Stomach (tissue), 19 donors: ENCODE measurements at regions of chr6 and their contacts with region 1.

Region 1: DNA sequence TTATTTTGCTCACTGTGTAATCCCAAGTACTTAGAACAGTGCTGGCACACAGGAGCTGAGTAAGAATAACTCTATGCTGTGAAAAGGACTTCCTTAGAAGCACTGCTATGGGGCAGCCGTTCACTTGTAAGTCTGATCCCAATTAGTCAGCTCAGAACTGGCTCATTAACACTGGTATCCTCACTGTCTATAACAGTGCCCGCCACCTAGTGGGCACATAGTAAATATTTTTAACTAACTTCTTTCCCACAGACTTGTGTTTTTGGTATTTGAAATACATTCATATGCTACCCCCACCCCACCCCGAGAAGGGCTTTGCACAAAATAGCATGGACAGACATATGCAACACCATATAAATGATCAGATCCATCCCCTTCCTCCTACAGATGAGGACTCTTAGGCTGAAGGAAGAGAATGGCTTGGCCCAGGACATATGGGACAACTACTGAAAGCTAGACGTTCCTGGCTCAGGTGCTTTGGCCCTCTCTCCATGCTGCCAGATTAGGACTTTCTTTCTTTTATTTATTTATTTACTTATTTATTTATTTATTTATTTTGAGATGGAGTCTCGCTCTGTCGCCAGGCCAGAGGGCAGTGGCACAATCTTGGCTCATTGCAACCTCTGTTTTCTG is 47.1 kb downstream of the DST start:
- DNase-seq: peak; percentile 34 to 73
- H3K4me3 ChIP-seq: no peak overlapping the region
- H3K27ac ChIP-seq: no peak overlapping the region
- H3K4me1 ChIP-seq: peaks cover 0 to 13% (median 0%) of the 10 kb centered on the region in 4 donors
- H3K27me3 ChIP-seq: no peaks in the 10 kb centered on the region
- CTCF ChIP-seq: peak in 4 of 7 experiments; percentile 25 to 63 (median 48)
- EP300 ChIP-seq: no peak
- POLR2A ChIP-seq: no peak

Region 2: DNA sequence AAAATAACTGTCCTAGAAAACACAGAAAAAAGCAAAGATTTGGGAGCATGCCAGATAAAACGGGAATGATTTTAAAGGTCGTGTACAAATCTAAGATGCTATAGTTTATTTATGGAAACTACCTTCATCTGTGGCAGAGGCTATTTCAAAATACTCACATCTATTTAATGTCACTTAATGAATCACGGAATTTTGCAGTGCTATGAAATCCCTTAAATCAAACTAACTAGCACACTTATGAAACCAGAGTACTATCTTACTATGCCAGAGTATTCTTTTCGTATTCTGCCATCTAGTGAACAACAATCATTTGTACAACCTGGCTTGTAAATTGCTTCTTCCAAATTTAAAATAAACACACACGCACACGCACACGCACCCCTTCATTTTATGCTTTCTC is 642.3 kb before region 1 on chr6:
- intact Hi-C with region 1: no loop called
- DNase-seq: peak in 1 of 2 donors; percentile 47
- H3K4me3 ChIP-seq: peak overlapping the region in 1 of 4 donors; percentile 5
- H3K27ac ChIP-seq: no peak overlapping the region
- H3K4me1 ChIP-seq: no peaks in the 10 kb centered on the region
- H3K27me3 ChIP-seq: no peaks in the 10 kb centered on the region
- CTCF ChIP-seq: peak in 2 of 7 experiments; percentile 9 to 10
- EP300 ChIP-seq: no peak
- POLR2A ChIP-seq: no peak

Region 3: GRCh38 chr6:56359201-56359899 is 236.3 kb before region 1 on chr6:
- intact Hi-C with region 1: loop called (anchors 10 kb)
- DNase-seq: peak; percentile 70 to 90
- H3K4me3 ChIP-seq: no peak overlapping the region
- H3K27ac ChIP-seq: no peak overlapping the region
- H3K4me1 ChIP-seq: peaks cover 0 to 24% (median 2%) of the 10 kb centered on the region in 4 donors
- H3K27me3 ChIP-seq: no peaks in the 10 kb centered on the region
- CTCF ChIP-seq: peak in 5 of 7 experiments; percentile 58 to 83 (median 72)
- EP300 ChIP-seq: no peak
- POLR2A ChIP-seq: no peak

Region 4: DNA sequence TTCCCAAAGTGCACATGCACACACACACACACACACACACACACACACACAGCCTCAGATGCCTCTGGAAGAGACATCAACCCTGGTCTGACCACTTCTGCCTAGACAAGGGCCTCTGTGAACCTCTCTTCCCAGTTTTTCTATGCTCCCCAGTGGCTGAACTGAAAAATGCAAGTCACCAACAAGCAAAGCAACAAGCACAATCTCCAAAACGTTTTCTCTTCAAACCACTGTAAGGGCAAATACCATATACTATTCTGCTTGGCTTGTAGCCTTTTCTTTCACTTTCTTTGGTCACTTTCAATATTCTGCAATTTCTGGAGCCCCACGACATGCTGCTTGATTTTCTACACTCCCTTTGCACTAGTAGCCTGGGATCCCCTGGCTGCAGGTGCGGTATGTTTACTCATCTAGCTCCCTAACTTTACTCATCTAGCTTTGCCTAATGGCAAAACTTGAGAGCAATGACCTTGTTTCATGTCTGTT is 168.5 kb after region 1 on chr6:
- intact Hi-C with region 1: no loop called
- DNase-seq: peak in 1 of 2 donors; percentile 64
- H3K4me3 ChIP-seq: no peak overlapping the region
- H3K27ac ChIP-seq: no peak overlapping the region
- H3K4me1 ChIP-seq: peaks cover 9 to 42% (median 13%) of the 10 kb centered on the region in 4 donors
- H3K27me3 ChIP-seq: no peaks in the 10 kb centered on the region
- CTCF ChIP-seq: peak in 5 of 7 experiments; percentile 8 to 45 (median 33)
- EP300 ChIP-seq: no peak
- POLR2A ChIP-seq: no peak